Body of pancreas (tissue), 4 donors: ENCODE measurements at regions of chr11 and their contacts with region 1.

Region 1: DNA sequence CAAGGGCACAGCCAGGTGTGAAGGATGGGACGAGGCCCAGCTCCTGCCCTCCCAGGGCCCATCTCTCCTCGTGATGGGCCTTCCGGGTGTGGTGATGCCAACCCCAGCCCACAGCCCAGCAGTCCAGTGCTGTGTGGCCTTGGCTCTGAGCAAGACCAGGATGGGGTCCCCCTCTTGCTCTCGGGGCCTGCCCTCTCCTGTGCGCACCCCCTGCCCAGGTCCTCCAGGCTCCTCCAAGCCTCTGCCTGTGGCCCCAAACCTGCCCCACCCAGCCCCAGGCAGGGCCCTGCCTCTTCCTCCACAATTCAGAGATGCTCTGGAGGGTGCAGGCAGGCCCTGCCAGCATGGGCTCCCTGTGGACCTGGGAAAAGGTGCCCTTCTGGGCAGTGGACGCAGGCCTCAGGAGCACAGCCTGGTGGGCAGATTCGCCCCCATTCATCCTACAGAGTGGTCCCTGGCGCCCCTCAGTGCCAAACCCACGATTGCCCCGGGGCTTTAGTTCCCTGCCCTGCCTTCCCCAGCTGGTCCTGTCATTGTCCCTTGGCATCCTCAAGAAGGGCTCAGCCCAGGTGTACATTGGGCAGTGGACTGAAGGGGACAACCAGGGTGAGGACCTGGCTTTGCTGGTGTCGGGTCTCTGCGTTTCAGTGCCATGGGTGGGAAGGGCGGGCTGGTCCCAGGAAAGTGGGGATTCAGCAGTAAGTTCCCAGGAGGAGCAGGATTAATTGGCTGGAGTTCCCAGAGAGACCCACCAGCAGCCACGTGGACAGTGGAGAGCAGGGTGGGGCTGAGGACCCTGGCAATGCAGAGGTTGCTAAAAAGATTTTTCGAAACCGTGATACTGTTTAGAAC is 19.8 kb downstream of the EIF1AD start:
- DNase-seq: no peak
- ATAC-seq: no peak
- H3K4me3 ChIP-seq: no peak overlapping the region
- H3K27ac ChIP-seq: peak overlapping the region in 1 of 4 donors; percentile 17
- H3K4me1 ChIP-seq: no peaks in the 10 kb centered on the region
- H3K27me3 ChIP-seq: no peaks in the 10 kb centered on the region
- CTCF ChIP-seq: no peak
- POLR2A ChIP-seq: no peak

Region 2: GRCh38 chr11:65859200-65859811 is 122.9 kb before region 1 on chr11:
- intact Hi-C with region 1: no loop called
- DNase-seq: peak; percentile 96 to 99 (median 98)
- ATAC-seq: peak; percentile 66
- H3K4me3 ChIP-seq: peak overlapping the region in 1 of 2 donors; percentile 18
- H3K27ac ChIP-seq: peak overlapping the region; percentile 92 to 96 (median 92)
- H3K4me1 ChIP-seq: peaks cover 51% of the 10 kb centered on the region
- H3K27me3 ChIP-seq: no peaks in the 10 kb centered on the region
- CTCF ChIP-seq: peak in 1 of 7 experiments; percentile 5
- POLR2A ChIP-seq: peak; percentile 62 to 86 (median 80)

Region 3: GRCh38 chr11:65884686-65885092 is 97.5 kb before region 1 on chr11:
- intact Hi-C with region 1: loop called (anchors 5 kb)
- DNase-seq: peak; percentile 75 to 82 (median 80)
- ATAC-seq: peak; percentile 37
- H3K4me3 ChIP-seq: no peak overlapping the region
- H3K27ac ChIP-seq: no peak overlapping the region
- H3K4me1 ChIP-seq: peaks cover 27% of the 10 kb centered on the region
- H3K27me3 ChIP-seq: no peaks in the 10 kb centered on the region
- CTCF ChIP-seq: peak; percentile 97 to 100 (median 99)
- POLR2A ChIP-seq: no peak

Region 4: DNA sequence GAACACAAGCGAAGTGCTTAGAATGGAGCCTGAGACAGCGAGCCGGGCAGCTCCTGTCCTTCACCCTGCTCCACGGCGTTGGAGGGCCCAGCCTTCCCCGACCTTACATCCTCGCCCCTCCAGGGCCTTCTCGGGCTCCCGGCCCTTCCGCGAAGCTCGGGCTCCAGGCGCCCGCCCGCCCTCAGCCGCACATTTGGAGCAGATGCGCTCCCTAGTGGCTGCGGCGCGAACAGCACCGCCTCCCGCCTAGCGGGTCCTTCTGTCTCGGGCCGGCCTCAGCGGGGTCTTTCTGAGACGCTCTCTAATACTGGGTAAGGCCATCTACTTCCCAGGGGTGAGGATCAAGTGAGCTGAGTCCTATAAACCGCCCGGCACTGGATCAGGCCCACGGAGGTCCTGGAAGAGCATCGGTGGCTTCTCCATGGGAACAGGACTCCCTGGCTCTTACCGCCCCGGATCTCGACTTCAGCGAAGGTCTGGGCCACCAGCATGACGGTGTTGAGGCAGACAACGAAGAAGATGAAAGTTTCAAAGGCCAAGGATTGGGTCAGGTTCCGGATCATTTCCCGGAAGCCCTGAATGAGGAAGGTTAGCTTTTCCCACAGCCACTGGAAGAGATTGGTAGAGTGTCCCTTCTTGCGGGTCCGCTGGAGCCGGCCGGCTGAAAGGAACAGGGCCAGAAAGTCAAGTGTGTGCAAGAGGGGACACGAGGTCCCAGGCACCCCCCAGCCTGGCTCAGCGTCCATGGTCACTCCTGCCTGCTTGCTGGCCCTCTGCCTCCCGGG is 40.4 kb after region 1 on chr11:
- intact Hi-C with region 1: no loop called
- DNase-seq: peak; percentile 66 to 82 (median 74)
- ATAC-seq: peak; percentile 89
- H3K4me3 ChIP-seq: no peak overlapping the region
- H3K27ac ChIP-seq: no peak overlapping the region
- H3K4me1 ChIP-seq: peaks cover 11% of the 10 kb centered on the region
- H3K27me3 ChIP-seq: no peaks in the 10 kb centered on the region
- CTCF ChIP-seq: peak; percentile 86 to 96 (median 89)
- POLR2A ChIP-seq: no peak